ENCODE measurements at regions of chr4 and their contacts with region 1.

Region 1: DNA sequence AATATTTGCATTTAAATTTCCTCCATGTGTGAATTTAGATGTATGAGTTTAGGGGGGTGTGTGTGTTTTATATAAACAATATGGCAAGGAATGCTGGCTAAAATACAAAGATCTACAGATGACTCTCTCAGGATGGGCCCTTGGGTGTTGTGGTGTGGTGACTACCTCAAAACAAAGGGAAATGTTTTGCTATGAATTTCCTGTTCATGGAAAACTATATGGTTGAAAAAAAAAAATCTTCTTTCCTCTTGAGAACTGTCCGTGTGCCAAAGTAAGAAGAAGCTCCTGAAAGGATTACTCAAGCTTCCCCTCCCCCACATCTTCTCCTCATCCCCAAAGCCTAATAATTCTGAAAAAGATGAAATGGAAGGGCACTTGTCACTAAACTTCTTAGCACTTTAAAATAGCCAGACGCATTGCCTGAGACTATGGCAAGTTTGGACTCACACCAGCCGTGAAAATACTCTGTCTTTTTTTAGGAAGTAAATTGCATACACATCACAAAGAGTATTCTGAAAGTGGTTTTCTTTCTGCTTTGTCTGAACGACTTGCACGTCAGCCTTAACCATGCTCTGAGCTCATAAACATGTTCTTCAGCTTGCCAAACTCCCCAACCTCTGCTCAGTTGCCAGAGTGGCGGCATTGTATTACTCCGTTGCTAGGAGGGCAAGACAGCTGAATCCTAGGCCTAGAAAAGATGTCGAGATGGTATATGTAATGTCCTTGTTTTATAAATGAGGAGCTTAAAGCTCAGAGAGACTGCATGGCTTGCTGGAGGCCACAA is 250.4 kb upstream of the JADE1 start:
- DNase-seq: no peak
- ATAC-seq: peak in 1 of 2 donors; percentile 60
- H3K4me3 ChIP-seq: no peak overlapping the region
- H3K27ac ChIP-seq: peak overlapping the region; percentile 17 to 62 (median 47)
- H3K4me1 ChIP-seq: peaks cover 11 to 15% of the 10 kb centered on the region in 2 donors
- H3K27me3 ChIP-seq: no peaks in the 10 kb centered on the region
- CTCF ChIP-seq: no peak
- POLR2A ChIP-seq: no peak

Region 2: DNA sequence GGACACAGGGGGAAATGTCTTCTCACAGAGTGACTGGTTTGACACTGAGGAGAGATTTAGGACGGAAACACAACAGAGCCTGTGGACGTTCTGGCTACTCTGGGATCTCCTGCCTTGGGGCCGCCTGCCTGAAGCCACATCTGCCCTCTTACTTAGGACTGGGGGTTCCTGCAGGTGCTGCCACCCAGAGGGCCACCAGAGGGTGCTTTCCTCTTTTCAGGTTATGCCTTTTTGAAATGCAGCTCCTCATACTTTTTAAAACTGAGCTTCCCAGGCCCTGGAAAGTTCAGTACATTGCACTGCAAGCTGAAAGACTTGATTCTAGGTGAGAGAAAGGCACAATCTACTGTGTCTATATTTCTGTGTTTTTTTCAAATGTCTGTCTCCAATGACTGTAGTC is 179.2 kb before region 1 on chr4:
- in situ Hi-C with region 1: no loop called
- intact Hi-C with region 1: loop called (anchors 10 kb)
- DNase-seq: peak in 1 of 2 donors; percentile 47
- ATAC-seq: peak; percentile 53 to 91
- H3K4me3 ChIP-seq: no peak overlapping the region
- H3K27ac ChIP-seq: no peak overlapping the region
- H3K4me1 ChIP-seq: peaks cover 0 to 6% of the 10 kb centered on the region in 2 donors
- H3K27me3 ChIP-seq: no peaks in the 10 kb centered on the region
- CTCF ChIP-seq: peak; percentile 47 to 72 (median 52)
- POLR2A ChIP-seq: no peak

Region 3: GRCh38 chr4:128444544-128445302 is 114.4 kb before region 1 on chr4:
- in situ Hi-C with region 1: no loop called
- intact Hi-C with region 1: no loop called
- DNase-seq: no peak
- ATAC-seq: no peak
- H3K4me3 ChIP-seq: no peak overlapping the region
- H3K27ac ChIP-seq: no peak overlapping the region
- H3K4me1 ChIP-seq: no peaks in the 10 kb centered on the region
- H3K27me3 ChIP-seq: no peaks in the 10 kb centered on the region
- CTCF ChIP-seq: no peak
- POLR2A ChIP-seq: no peak